ENCODE measurements at regions of chr2 and their contacts with region 1.

Region 1: DNA sequence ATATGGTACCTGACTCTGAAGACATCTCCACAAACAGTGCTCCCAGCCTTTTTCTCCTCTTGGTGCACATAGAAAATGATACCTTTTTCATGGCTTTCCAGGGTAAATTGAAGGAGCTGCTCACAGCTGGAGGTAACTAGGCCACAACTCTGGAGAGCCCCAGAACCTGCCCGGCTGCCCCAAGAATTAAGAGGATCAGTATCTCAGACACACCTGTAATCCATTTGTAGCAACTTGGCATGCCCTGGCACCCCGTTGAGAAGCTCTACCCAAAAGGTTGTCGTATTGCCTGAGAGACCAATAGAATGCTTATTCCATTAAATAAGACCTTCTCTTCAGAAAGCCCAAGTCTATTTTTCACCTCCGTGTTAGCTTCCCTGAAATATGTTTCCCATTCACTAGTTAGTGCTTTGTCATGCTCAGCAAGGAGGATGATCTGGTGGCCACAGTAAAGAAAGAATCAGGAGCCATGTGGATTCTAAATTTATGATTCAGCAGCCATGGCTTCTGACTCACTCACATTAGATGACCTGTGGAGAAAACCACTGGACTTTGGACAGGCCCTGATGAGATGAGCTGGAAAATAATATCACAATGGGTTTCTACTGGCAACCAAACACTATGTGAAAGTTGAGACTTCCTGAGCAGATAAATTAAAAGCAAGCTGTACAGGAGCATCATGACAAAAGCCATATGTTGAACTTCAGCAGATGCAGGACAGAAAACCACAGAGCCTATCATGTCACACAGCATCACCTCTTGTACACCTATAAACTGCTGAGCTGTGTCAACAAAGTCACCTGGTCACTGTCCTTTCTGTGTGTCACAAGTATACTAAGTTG is 253.3 kb upstream of the OSR1 start:
- DNase-seq: peak; percentile 97
- H3K4me3 ChIP-seq: no peak overlapping the region
- H3K27ac ChIP-seq: peak overlapping the region; percentile 91
- H3K4me1 ChIP-seq: peaks cover 30% of the 10 kb centered on the region
- H3K27me3 ChIP-seq: no peaks in the 10 kb centered on the region
- CTCF ChIP-seq: no peak

Region 2: GRCh38 chr2:19545507-19545906 is 66.2 kb before region 1 on chr2:
- CTCF ChIA-PET with region 1: no interaction called
- dilution Hi-C with region 1: no loop called
- in situ Hi-C with region 1: no loop called
- intact Hi-C with region 1: loop called (anchors 1 kb)
- DNase-seq: no peak
- H3K4me3 ChIP-seq: no peak overlapping the region
- H3K27ac ChIP-seq: no peak overlapping the region
- H3K4me1 ChIP-seq: peaks cover 45% of the 10 kb centered on the region
- H3K27me3 ChIP-seq: no peaks in the 10 kb centered on the region
- CTCF ChIP-seq: no peak

Region 3: DNA sequence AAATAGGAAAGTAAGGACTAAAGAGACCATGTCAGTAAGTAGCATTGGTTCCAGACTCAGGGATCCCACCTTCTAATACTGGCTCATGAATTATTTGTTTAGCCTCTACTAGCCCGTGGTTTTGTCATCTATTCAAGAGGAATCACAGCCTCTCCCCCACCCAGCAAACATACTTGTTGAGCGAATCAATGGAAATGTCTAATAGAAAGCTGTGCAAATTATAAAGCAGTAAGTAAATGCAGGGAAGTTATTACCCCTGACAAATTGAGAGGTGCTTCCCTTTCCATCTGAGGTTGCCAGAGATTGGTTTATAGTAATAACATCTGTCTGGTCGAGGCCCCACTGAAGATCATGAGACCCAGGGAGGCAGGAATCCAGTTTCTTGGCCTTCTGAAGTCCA is 34.0 kb before region 1 on chr2:
- CTCF ChIA-PET with region 1: no interaction called
- dilution Hi-C with region 1: no loop called
- in situ Hi-C with region 1: no loop called
- intact Hi-C with region 1: loop called (anchors 2 kb)
- DNase-seq: peak; percentile 49
- H3K4me3 ChIP-seq: no peak overlapping the region
- H3K27ac ChIP-seq: no peak overlapping the region
- H3K4me1 ChIP-seq: peaks cover 37% of the 10 kb centered on the region
- H3K27me3 ChIP-seq: no peaks in the 10 kb centered on the region
- CTCF ChIP-seq: no peak

Region 4: DNA sequence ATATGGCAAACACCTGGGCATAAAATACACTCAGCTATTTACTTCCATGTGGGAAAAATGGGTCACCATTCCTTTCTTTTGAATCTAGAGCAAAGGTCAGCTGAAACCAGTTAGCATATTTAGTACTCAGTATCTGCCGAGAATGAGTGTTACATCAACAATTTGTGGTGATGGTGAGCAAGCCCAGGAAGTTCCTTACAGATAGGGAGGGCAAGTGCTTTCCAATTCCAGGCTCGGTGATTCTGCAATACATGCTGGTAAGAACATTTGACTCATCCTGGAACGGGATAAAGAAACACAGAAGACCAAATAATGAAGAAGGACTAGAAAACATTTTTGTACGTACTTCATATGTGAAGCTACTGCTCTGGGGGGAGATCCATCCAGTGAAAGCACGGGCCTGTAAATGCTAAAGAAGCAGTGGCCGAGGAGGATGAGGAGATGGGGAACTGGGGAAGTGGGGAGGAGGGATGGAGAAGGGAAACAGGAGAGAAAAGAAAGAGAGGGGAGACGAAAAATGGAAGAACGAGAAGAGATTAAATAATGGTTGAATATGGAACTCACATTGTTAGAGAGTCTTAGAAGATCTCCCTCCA is 38.2 kb after region 1 on chr2:
- CTCF ChIA-PET with region 1: no interaction called
- dilution Hi-C with region 1: no loop called
- in situ Hi-C with region 1: no loop called
- intact Hi-C with region 1: loop called (anchors 2 kb)
- DNase-seq: peak; percentile 99
- H3K4me3 ChIP-seq: no peak overlapping the region
- H3K27ac ChIP-seq: peak overlapping the region; percentile 85
- H3K4me1 ChIP-seq: peaks cover 50% of the 10 kb centered on the region
- H3K27me3 ChIP-seq: no peaks in the 10 kb centered on the region
- CTCF ChIP-seq: no peak